Endothelial cell of umbilical vein (primary cell): ENCODE measurements at regions of chr1 and their contacts with region 1.

Region 1: DNA sequence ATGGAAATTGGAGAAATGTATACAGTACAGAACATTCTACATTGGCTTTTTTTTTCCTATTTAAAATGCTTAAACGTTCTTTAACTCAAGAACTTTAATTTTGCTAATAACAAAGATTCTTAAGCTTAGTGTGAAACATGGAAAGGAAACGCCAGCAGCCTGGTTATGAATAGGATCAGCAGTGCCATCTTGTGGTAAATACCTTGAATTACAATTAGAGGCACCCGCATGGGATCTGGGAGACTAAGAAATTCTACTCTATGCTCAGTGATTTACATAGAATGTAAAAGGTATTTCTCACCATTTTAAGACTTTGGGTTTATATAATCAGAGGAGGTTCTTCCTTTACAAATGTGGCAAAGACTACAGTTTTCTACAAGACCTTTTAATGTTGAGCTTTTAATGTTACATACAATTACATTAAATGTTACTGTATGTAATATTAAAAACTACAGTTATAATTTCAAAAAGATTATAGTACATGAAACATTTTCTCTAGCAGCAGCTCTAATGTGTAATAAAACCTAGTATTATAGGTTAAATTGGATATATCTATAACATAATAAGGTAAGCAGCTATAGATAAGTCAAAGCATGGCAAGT is 32.1 kb upstream of the APOBEC4 start:
- DNase-seq: peak; percentile 63
- H3K4me3 ChIP-seq: no peak overlapping the region
- H3K27ac ChIP-seq: no peak overlapping the region
- H3K4me1 ChIP-seq: no peaks in the 10 kb centered on the region
- H3K27me3 ChIP-seq: no peaks in the 10 kb centered on the region
- CTCF ChIP-seq: peak; percentile 41 to 55
- POLR2A ChIP-seq: no peak

Region 2: GRCh38 chr1:183281553-183282091 is 403.6 kb before region 1 on chr1:
- CTCF ChIA-PET with region 1: interaction called, 11 read pairs
- POLR2A ChIA-PET with region 1: no interaction called
- dilution Hi-C with region 1: no loop called
- intact Hi-C with region 1: loop called (anchors 2 kb)
- DNase-seq: peak; percentile 92
- H3K4me3 ChIP-seq: no peak overlapping the region
- H3K27ac ChIP-seq: no peak overlapping the region
- H3K4me1 ChIP-seq: peaks cover 12% of the 10 kb centered on the region
- H3K27me3 ChIP-seq: no peaks in the 10 kb centered on the region
- CTCF ChIP-seq: peak; percentile 83 to 91
- POLR2A ChIP-seq: no peak

Region 3: DNA sequence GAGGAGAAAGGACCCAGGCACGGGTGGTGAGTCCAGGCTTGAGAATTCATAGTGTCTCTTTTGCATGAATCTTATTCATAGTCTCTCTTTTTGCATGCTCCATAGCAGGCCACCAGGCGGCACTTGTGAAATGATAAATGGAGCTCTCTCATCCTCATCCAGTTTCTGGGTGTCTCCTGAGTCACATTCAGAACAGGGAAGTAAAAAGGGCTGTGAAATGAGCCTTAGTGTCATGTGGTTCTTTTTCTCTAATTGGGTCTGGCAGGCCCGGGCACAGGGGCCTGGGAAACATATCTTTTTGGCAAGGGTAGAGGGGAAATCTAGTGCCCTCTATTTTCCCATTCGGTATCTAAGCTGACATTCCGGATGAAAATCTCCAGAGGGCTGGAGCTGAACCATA is 75.9 kb before region 1 on chr1:
- CTCF ChIA-PET with region 1: interaction called, 27 read pairs
- POLR2A ChIA-PET with region 1: no interaction called
- dilution Hi-C with region 1: no loop called
- intact Hi-C with region 1: no loop called
- DNase-seq: peak; percentile 45
- H3K4me3 ChIP-seq: no peak overlapping the region
- H3K27ac ChIP-seq: no peak overlapping the region
- H3K4me1 ChIP-seq: peaks cover 16% of the 10 kb centered on the region
- H3K27me3 ChIP-seq: no peaks in the 10 kb centered on the region
- CTCF ChIP-seq: peak; percentile 47 to 50
- POLR2A ChIP-seq: no peak

Region 4: DNA sequence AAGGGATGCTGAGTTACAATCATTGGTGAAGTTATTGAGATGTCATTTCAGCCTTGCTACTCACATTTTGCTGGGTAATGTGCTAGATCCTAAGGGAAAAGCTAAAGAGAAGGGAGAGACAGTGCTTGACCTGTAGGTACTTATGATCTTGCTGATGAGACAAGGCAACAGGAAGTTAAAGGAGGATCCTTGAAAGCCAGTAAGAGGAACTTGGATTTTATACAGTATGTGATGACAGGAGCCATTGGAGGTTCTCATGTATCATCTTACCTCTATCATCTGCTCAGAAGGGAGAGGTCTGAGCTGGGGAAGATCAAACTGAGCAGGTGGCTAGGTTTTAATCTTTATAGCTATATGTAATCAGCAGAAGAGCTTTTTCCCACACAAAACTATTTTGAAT is 38.4 kb before region 1 on chr1:
- CTCF ChIA-PET with region 1: interaction called, 15 read pairs
- POLR2A ChIA-PET with region 1: no interaction called
- dilution Hi-C with region 1: no loop called
- intact Hi-C with region 1: no loop called
- DNase-seq: no peak
- H3K4me3 ChIP-seq: no peak overlapping the region
- H3K27ac ChIP-seq: no peak overlapping the region
- H3K4me1 ChIP-seq: peaks cover 7% of the 10 kb centered on the region
- H3K27me3 ChIP-seq: no peaks in the 10 kb centered on the region
- CTCF ChIP-seq: no peak
- POLR2A ChIP-seq: no peak

Region 5: GRCh38 chr1:183670178-183670577 is 15.0 kb before region 1 on chr1:
- CTCF ChIA-PET with region 1: interaction called, 25 read pairs
- POLR2A ChIA-PET with region 1: no interaction called
- dilution Hi-C with region 1: no loop called
- intact Hi-C with region 1: no loop called
- DNase-seq: no peak
- H3K4me3 ChIP-seq: no peak overlapping the region
- H3K27ac ChIP-seq: no peak overlapping the region
- H3K4me1 ChIP-seq: no peaks in the 10 kb centered on the region
- H3K27me3 ChIP-seq: no peaks in the 10 kb centered on the region
- CTCF ChIP-seq: peak in 1 of 2 donors; percentile 5
- POLR2A ChIP-seq: no peak

Region 6: DNA sequence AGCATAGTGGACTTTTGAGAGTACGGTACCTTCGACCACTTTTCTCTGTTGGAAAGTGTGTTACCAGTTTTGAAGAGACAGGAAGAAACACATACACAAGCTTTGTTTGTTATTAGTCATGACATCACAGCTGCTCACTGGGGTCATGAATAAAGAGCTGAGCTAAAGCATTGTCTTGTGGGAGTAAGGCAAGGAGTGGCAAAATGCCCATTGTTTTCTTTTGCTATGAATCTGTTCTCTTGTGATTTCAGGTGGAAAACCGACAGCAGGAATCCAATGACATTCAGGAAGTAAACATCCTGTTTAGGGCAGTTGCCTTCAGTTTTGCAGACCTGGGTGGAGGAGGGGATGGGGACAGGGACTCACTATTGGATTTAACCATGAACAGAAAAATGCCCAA is 185.9 kb after region 1 on chr1:
- CTCF ChIA-PET with region 1: interaction called, 6 read pairs
- POLR2A ChIA-PET with region 1: interaction called, 3 read pairs
- dilution Hi-C with region 1: no loop called
- intact Hi-C with region 1: loop called (anchors 1 kb)
- DNase-seq: peak; percentile 93
- H3K4me3 ChIP-seq: peak overlapping the region in 1 of 3 experiments; percentile 15
- H3K27ac ChIP-seq: peak overlapping the region; percentile 99
- H3K4me1 ChIP-seq: peaks cover 63% of the 10 kb centered on the region
- H3K27me3 ChIP-seq: no peaks in the 10 kb centered on the region
- CTCF ChIP-seq: no peak
- POLR2A ChIP-seq: peak; percentile 62